GM10248 (cell line): ENCODE measurements at regions of chr3 and their contacts with region 1.

Region 1: GRCh38 chr3:113825090-113825489 is 13.5 kb upstream of the GRAMD1C start:
- DNase-seq: peak; percentile 68
- CTCF ChIP-seq: no peak

Region 2: GRCh38 chr3:113802795-113803455 is 22.2 kb before region 1 on chr3:
- CTCF ChIA-PET with region 1: interaction called, 18 read pairs
- POLR2A ChIA-PET with region 1: no interaction called
- DNase-seq: no peak
- CTCF ChIP-seq: no peak

Region 3: DNA sequence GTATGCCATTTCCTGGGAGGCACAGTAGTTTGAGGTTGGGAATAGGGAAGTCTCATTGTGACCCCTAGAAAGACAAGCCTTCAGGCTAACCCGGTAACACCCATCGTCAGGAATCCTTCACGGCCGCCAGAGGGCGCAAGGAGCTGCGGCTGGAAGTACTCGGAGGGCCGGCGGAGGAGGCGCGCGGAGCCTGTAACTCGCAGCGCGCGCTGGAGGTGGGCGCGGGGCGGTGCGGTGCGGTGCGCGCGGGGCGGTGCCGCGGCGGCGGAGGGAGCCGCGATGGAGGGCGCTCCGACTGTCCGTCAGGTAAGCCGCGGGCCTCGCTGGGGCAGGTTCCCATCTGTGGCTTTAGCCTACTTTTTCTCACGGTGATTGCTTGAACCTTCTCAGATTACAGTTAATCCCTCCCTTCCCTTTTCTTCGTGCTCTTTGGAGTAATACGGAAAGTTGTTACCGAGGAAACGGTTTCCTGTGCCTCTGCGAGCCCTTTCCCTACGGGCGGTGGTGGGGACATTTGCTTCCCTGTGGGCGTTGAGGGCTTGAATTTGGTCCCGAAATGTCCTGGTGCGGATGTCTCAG is 13.6 kb after region 1 on chr3 and contains the start of gene GRAMD1C:
- CTCF ChIA-PET with region 1: interaction called, 35 read pairs
- POLR2A ChIA-PET with region 1: no interaction called
- DNase-seq: peak; percentile 88
- CTCF ChIP-seq: peak; percentile 96

Region 4: GRCh38 chr3:113844622-113845222 is 19.6 kb after region 1 on chr3:
- CTCF ChIA-PET with region 1: interaction called, 35 read pairs
- POLR2A ChIA-PET with region 1: no interaction called
- DNase-seq: peak; percentile 43
- CTCF ChIP-seq: peak; percentile 47

Region 5: GRCh38 chr3:114022153-114022802 is 197.2 kb after region 1 on chr3:
- CTCF ChIA-PET with region 1: no interaction called
- POLR2A ChIA-PET with region 1: no interaction called
- DNase-seq: no peak
- CTCF ChIP-seq: no peak